Activated naive CD4-positive, alpha-beta T cell treated with anti-CD3 and anti-CD28 coated beads for 36 hours (primary cell): ENCODE measurements at regions of chr21 and their contacts with region 1.

Region 1: DNA sequence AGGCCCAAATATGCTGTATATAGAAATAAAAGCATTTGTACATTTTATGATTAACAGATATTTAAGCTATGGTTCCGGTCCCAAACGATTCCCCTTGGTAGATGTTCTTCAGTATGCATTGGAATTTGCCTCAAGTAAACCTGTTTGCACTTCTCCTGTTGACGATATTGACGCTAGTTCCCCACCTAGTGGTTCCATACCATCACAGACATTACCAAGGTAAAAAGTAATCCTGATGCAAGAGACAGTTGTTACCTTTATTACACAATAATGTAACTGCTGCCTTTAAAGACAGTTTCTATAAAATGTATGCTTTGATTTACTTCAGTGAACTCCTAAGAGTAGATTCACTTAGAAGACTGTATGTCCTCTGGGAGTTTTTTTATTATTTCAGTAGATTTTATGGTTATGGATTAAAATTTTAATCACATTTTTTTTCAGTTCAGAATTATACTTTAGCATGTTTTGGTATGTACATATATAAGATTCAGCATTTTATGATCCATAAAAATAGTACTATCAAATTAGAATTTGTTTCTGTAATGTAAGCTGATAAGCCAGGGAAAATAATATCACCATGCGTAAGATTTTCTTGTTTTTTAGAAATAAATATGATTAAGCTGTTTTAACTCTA is 96.5 kb downstream of the USP25 start:
- DNase-seq: peak; percentile 53
- H3K4me3 Mint-ChIP-seq: no peak overlapping the region
- H3K27ac Mint-ChIP-seq: no peak overlapping the region
- H3K4me1 Mint-ChIP-seq: peaks cover 28% of the 10 kb centered on the region
- H3K27me3 Mint-ChIP-seq: no peaks in the 10 kb centered on the region

Region 2: DNA sequence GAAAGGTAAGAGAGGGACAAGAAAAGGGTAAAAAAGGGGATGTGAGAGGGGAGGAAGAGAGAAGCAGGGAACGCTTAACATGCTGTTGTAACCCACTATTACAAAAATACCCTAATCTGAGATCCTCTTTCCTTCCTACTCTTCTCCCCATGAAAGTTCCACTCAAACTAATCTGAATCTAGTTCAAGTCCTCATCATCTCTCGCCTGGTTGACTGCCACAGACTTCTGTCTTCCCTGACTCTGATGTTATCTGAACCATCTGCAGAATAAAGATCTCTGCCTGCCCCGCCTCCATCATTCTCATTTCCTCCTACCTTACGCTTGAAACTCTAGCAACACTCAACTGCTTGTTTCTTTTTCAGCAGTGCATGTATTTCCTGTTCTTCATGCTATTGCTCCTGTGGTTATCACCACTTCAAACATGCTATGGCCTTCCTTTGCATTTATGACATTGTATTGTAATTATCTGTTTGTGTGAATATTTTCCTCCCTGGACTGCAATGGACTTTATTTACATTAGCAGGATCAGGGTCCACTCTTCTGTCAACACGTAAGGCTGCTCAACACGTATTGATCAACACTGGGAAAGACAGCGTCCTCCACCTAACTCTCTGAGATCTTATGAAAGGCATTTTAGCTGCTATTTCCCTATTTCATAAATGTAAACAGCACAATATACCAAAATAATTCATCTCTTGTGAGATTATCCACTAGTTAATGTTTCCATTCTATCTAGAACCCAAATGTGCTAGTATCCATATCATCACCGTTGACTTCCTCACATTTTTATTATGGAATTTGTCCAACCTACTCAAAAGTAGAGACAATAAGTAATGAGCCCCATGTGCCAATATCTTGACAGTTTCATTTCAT is 312.0 kb before region 1 on chr21:
- CTCF ChIA-PET with region 1: no interaction called
- intact Hi-C with region 1: loop called (anchors 10 kb)
- DNase-seq: peak; percentile 72
- H3K4me3 Mint-ChIP-seq: peak overlapping the region; percentile 55
- H3K27ac Mint-ChIP-seq: peak overlapping the region; percentile 85
- H3K4me1 Mint-ChIP-seq: peaks cover 28% of the 10 kb centered on the region
- H3K27me3 Mint-ChIP-seq: no peaks in the 10 kb centered on the region

Region 3: GRCh38 chr21:15592271-15592860 is 233.9 kb before region 1 on chr21:
- CTCF ChIA-PET with region 1: no interaction called
- intact Hi-C with region 1: loop called (anchors 10 kb)
- DNase-seq: peak; percentile 5
- H3K4me3 Mint-ChIP-seq: no peak overlapping the region
- H3K27ac Mint-ChIP-seq: no peak overlapping the region
- H3K4me1 Mint-ChIP-seq: no peaks in the 10 kb centered on the region
- H3K27me3 Mint-ChIP-seq: no peaks in the 10 kb centered on the region

Region 4: GRCh38 chr21:15682186-15682895 is 143.9 kb before region 1 on chr21:
- CTCF ChIA-PET with region 1: no interaction called
- intact Hi-C with region 1: loop called (anchors 2 kb)
- DNase-seq: no peak
- H3K4me3 Mint-ChIP-seq: no peak overlapping the region
- H3K27ac Mint-ChIP-seq: no peak overlapping the region
- H3K4me1 Mint-ChIP-seq: peaks cover 10% of the 10 kb centered on the region
- H3K27me3 Mint-ChIP-seq: no peaks in the 10 kb centered on the region

Region 5: GRCh38 chr21:15793547-15794235 is 32.6 kb before region 1 on chr21:
- CTCF ChIA-PET with region 1: no interaction called
- intact Hi-C with region 1: loop called (anchors 2 kb)
- DNase-seq: no peak
- H3K4me3 Mint-ChIP-seq: no peak overlapping the region
- H3K27ac Mint-ChIP-seq: no peak overlapping the region
- H3K4me1 Mint-ChIP-seq: peaks cover 49% of the 10 kb centered on the region
- H3K27me3 Mint-ChIP-seq: no peaks in the 10 kb centered on the region

Region 6: DNA sequence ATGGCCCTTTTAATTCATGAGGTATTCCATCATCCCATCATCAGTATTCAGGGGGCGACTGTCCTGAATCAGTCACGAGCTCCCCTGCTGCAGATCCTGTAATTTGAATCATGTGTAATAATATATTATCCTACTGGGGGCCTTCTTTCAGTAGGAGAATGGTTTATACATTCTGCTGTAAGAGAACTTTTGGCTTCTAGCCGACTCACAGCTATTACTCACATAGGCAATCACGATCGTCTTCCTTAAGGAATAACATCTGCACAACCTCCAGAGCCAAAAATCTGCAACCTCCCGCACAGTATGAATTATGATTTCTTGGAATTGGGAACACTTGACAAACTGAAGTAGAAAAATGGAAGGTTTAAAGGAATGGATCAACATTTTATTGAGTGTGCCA is 246.5 kb after region 1 on chr21:
- CTCF ChIA-PET with region 1: no interaction called
- intact Hi-C with region 1: no loop called
- DNase-seq: no peak
- H3K4me3 Mint-ChIP-seq: no peak overlapping the region
- H3K27ac Mint-ChIP-seq: no peak overlapping the region
- H3K4me1 Mint-ChIP-seq: no peaks in the 10 kb centered on the region
- H3K27me3 Mint-ChIP-seq: peaks cover 2% of the 10 kb centered on the region